PC-9 (cell line): ENCODE measurements at regions of chr4 and their contacts with region 1.

Region 1: DNA sequence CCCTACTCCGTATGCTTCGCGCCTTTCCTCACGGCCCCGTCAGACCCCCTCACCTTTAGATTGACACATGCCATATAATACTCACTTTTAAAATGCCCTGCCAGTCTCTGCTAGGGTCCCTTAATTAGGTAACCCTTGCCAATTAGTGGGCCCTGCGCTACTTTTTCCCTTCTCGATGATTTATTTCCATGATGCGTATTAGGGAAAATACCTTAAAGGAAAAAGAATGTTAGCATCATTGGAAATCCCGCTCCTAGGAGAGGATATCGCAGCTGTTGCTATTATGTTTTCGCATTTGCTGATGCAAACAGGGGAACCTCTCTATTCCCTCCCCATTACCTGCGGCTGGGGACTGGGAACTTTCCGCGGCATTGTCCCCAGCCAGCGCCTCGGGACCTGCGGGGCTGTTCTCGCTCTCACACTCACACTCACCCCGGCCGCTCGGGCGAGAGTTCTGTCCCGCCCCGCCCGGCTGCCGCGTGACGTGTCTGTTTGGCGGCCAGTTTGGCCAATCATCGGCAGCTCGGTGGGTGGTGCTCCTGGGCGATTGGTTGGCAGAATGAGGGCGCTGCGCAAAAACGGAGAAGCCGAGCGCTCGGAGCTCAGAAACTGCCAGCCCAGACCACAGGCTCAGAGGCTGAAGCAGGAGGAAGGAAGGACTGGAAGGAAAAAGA is at the start of gene PCDH10:
- DNase-seq: peak in 1 of 2 experiments; percentile 54
- H3K4me3 ChIP-seq: no peak within 1 kb of the TSS
- H3K27ac ChIP-seq: no peak within 1 kb of the TSS
- H3K4me1 ChIP-seq: no peaks in the 10 kb centered on the region
- H3K27me3 ChIP-seq: no peaks in the 10 kb centered on the region
- CTCF ChIP-seq: no peak
- total RNA-seq, gene PCDH10: not detected in 2 replicates

Region 2: DNA sequence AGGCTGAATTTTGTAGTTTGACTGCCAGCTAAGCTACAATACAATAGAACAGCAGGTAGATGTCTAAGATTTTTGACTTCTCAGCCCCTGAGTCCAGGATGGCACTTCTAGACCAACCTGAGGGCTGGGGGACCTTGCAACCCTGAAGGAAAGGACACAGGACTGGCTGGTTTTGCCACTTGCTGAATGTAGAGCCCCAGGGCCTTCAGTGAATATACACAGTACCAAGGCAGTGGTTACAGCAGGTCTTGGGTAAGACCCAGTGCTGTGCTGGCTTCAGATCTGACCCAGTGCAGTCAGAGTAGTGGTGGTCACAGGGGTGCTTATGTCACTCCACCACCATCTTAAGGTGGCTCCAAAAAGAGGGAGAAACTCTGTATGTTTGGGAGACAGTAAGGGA is 277.2 kb before region 1 on chr4:
- CTCF ChIA-PET with region 1: no interaction called
- POLR2A ChIA-PET with region 1: no interaction called
- intact Hi-C with region 1: no loop called
- DNase-seq: no peak
- H3K4me3 ChIP-seq: no peak overlapping the region
- H3K27ac ChIP-seq: no peak overlapping the region
- H3K4me1 ChIP-seq: no peaks in the 10 kb centered on the region
- H3K27me3 ChIP-seq: no peaks in the 10 kb centered on the region
- CTCF ChIP-seq: no peak

Region 3: GRCh38 chr4:133270021-133270570 is 121.3 kb after region 1 on chr4:
- CTCF ChIA-PET with region 1: no interaction called
- POLR2A ChIA-PET with region 1: interaction called, 10 read pairs
- intact Hi-C with region 1: no loop called
- DNase-seq: no peak
- H3K4me3 ChIP-seq: no peak overlapping the region
- H3K27ac ChIP-seq: no peak overlapping the region
- H3K4me1 ChIP-seq: no peaks in the 10 kb centered on the region
- H3K27me3 ChIP-seq: no peaks in the 10 kb centered on the region
- CTCF ChIP-seq: no peak

Region 4: GRCh38 chr4:133483600-133484246 is 334.9 kb after region 1 on chr4:
- CTCF ChIA-PET with region 1: no interaction called
- POLR2A ChIA-PET with region 1: no interaction called
- intact Hi-C with region 1: loop called (anchors 10 kb)
- DNase-seq: no peak
- H3K4me3 ChIP-seq: no peak overlapping the region
- H3K27ac ChIP-seq: no peak overlapping the region
- H3K4me1 ChIP-seq: no peaks in the 10 kb centered on the region
- H3K27me3 ChIP-seq: no peaks in the 10 kb centered on the region
- CTCF ChIP-seq: peak; percentile 44

Region 5: GRCh38 chr4:134777606-134778005 is 1628.8 kb after region 1 on chr4:
- CTCF ChIA-PET with region 1: interaction called, 3 read pairs
- POLR2A ChIA-PET with region 1: no interaction called
- intact Hi-C with region 1: loop called (anchors 5 kb)
- DNase-seq: no peak
- H3K4me3 ChIP-seq: no peak overlapping the region
- H3K27ac ChIP-seq: no peak overlapping the region
- H3K4me1 ChIP-seq: no peaks in the 10 kb centered on the region
- H3K27me3 ChIP-seq: no peaks in the 10 kb centered on the region
- CTCF ChIP-seq: peak; percentile 31

Region 6: DNA sequence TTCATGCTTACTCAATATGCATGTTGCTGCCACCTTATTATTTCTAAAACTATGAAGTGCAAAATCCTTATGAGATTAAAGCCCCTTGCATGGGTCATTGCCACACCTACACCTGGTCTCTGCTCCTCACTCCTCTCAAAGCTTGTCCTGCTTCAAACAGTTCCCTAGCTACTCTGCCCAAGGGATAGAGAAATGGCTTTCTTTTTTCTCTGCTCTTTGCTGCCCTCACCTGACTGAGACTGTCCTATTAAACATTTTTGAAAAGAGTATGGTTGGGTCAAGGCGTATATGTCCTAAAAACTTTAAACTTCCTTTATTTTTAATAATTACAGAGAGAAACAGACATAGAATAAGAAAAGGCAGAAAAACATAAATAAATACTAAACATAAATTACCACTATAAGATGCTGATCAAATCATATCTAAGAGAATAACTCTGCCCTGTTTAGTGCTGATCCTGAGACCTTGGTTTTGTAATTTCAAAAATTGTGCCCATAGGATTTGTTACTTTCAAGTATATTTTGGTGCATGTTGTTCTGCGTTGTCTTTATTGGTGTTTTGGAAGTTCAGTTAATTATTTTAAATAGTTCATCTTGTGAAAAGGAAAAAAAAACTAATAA is 1757.7 kb after region 1 on chr4:
- CTCF ChIA-PET with region 1: no interaction called
- POLR2A ChIA-PET with region 1: no interaction called
- intact Hi-C with region 1: loop called (anchors 5 kb)
- DNase-seq: peak in 1 of 2 experiments; percentile 6
- H3K4me3 ChIP-seq: no peak overlapping the region
- H3K27ac ChIP-seq: no peak overlapping the region
- H3K4me1 ChIP-seq: no peaks in the 10 kb centered on the region
- H3K27me3 ChIP-seq: no peaks in the 10 kb centered on the region
- CTCF ChIP-seq: peak; percentile 47; the same call in 1 of the 2 replicates